Esophagus squamous epithelium (tissue), 5 donors: ENCODE measurements at regions of chr4 and their contacts with region 1.

Region 1: GRCh38 chr4:86497980-86498862 is 95.9 kb upstream of the PTPN13 start:
- DNase-seq: no peak
- H3K4me3 ChIP-seq: no peak overlapping the region
- H3K27ac ChIP-seq: peak overlapping the region in 2 of 4 donors; percentile 51 to 59
- H3K4me1 ChIP-seq: peaks cover 8 to 52% (median 12%) of the 10 kb centered on the region in 3 donors
- H3K27me3 ChIP-seq: no peaks in the 10 kb centered on the region
- CTCF ChIP-seq: peak in 5 of 6 experiments; percentile 56 to 85 (median 77)
- POLR2A ChIP-seq: no peak

Region 2: GRCh38 chr4:86895692-86896488 is 397.7 kb after region 1 on chr4:
- intact Hi-C with region 1: loop called (anchors 5 kb)
- DNase-seq: no peak
- H3K4me3 ChIP-seq: no peak overlapping the region
- H3K27ac ChIP-seq: peak overlapping the region in 1 of 4 donors; percentile 36
- H3K4me1 ChIP-seq: peaks cover 0 to 30% (median 3%) of the 10 kb centered on the region in 3 donors
- H3K27me3 ChIP-seq: no peaks in the 10 kb centered on the region
- CTCF ChIP-seq: peak; percentile 47 to 87 (median 76)
- POLR2A ChIP-seq: no peak

Region 3: DNA sequence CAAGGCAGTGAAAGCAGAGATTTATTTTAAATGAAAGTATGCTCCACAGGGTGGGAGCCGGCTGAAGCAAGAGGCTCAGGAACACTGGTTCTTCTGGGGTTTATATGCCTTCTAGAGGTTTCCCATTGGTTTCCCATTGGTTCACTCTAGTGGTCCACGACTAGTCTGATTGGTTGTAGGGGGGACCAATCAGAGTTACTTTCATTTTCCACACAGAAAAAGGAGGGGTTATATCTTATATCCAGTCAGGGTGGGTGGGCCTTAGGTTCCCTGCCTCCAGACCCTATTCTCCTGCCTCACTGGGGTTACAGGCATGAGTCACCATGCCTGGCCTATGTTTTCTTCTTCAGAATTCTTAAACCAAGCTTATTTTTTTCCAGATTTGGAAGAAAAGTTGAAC is 620.6 kb after region 1 on chr4:
- intact Hi-C with region 1: loop called (anchors 5 kb)
- DNase-seq: no peak
- H3K4me3 ChIP-seq: no peak overlapping the region
- H3K27ac ChIP-seq: peak overlapping the region in 3 of 4 donors; percentile 80 to 86 (median 85)
- H3K4me1 ChIP-seq: peaks cover 22 to 83% (median 27%) of the 10 kb centered on the region in 3 donors
- H3K27me3 ChIP-seq: no peaks in the 10 kb centered on the region
- CTCF ChIP-seq: no peak
- POLR2A ChIP-seq: no peak